Right ventricle myocardium inferior (tissue), 1 donor: ENCODE measurements at regions of chr17 and their contacts with region 1.

Region 1: GRCh38 chr17:1920948-1921351 is 91.1 kb downstream of the RPA1 start:
- DNase-seq: peak; percentile 44
- ATAC-seq: peak; percentile 72

Region 2: GRCh38 chr17:1999557-2000251 is 78.8 kb after region 1 on chr17:
- intact Hi-C with region 1: loop called (anchors 5 kb)
- DNase-seq: peak; percentile 80
- ATAC-seq: peak; percentile 87